Activated CD8-positive, alpha-beta T cell treated with anti-CD3 and anti-CD28 coated beads for 36 hours (primary cell): ENCODE measurements at regions of chr17 and their contacts with region 1.

Region 1: GRCh38 chr17:58006924-58007780 is at the start of gene SRSF1:
- DNase-seq: peak; percentile 98
- ATAC-seq: peak; percentile 91
- H3K4me3 Mint-ChIP-seq: peak within 1 kb of the TSS; percentile 97
- H3K27ac Mint-ChIP-seq: peak within 1 kb of the TSS; percentile 99
- H3K4me1 Mint-ChIP-seq: peaks cover 40% of the 10 kb centered on the region
- H3K27me3 Mint-ChIP-seq: no peaks in the 10 kb centered on the region
- CTCF ChIP-seq: no peak
- total RNA-seq, gene SRSF1: 333 to 342 TPM

Region 2: DNA sequence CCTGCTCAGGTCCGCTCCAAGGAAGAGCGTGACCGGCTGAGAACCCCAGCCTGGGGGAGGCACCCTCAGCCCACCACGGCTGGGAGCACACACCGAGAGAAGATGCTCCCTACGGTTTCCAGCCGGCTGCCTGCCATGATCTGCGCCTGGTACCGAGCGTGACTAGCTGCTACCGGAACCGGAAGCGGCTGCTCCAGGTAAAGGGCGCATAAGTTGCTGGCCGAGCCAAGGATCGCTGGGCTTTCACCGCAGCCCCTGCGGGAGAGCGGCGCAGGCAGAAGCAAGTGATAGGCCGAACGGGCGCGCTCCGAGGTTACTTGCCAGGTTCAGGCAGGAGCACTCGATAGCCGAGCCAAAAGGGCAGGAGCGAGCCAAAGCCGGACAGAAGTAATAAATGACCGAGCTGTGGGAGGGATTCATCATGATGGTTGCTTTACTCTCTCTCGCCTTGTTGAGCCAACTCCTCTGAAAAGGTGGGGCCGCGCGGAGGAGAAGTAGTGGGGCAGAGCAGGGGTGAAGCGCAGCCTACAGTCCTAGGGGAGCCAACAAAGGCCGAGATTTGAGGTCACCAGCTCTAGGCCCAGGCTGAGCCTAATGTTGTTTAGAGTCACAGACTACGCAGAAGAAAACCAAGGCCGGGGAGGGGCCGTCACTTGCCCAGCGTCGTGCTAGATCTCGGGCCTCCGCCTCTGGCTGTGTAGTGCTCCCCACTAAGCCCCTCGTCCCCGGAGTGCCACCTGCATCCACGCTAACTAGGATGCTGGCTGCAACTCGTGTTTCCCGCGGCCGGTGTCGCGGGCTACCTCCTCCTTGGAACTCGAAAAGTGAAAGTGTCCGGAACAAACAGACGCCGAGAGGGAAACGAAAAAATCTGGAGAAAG is 157.0 kb before region 1 on chr17 and contains the start of gene MRPS23:
- CTCF ChIA-PET with region 1: interaction called, 177 read pairs
- POLR2A ChIA-PET with region 1: interaction called, 18 read pairs
- intact Hi-C with region 1: no loop called
- DNase-seq: peak; percentile 98
- ATAC-seq: peak; percentile 97
- H3K4me3 Mint-ChIP-seq: peak within 1 kb of the TSS; percentile 91
- H3K27ac Mint-ChIP-seq: peak within 1 kb of the TSS; percentile 95
- H3K4me1 Mint-ChIP-seq: peaks cover 30% of the 10 kb centered on the region
- H3K27me3 Mint-ChIP-seq: no peaks in the 10 kb centered on the region
- CTCF ChIP-seq: no peak
- total RNA-seq, gene MRPS23: 69.5 to 70.0 TPM

Region 3: GRCh38 chr17:57987580-57988421 is 19.4 kb before region 1 on chr17 and contains the start of gene VEZF1:
- CTCF ChIA-PET with region 1: interaction called, 10 read pairs
- POLR2A ChIA-PET with region 1: interaction called, 230 read pairs
- intact Hi-C with region 1: no loop called
- DNase-seq: peak; percentile 81
- ATAC-seq: peak; percentile 64
- H3K4me3 Mint-ChIP-seq: peak within 1 kb of the TSS; percentile 87
- H3K27ac Mint-ChIP-seq: peak within 1 kb of the TSS; percentile 91
- H3K4me1 Mint-ChIP-seq: peaks cover 67% of the 10 kb centered on the region
- H3K27me3 Mint-ChIP-seq: no peaks in the 10 kb centered on the region
- CTCF ChIP-seq: no peak
- total RNA-seq, gene VEZF1: 17.9 to 19.6 TPM

Region 4: GRCh38 chr17:58046239-58047094 is 39.3 kb after region 1 on chr17:
- CTCF ChIA-PET with region 1: no interaction called
- POLR2A ChIA-PET with region 1: no interaction called
- intact Hi-C with region 1: no loop called
- DNase-seq: no peak
- ATAC-seq: no peak
- H3K4me3 Mint-ChIP-seq: no peak overlapping the region
- H3K27ac Mint-ChIP-seq: no peak overlapping the region
- H3K4me1 Mint-ChIP-seq: no peaks in the 10 kb centered on the region
- H3K27me3 Mint-ChIP-seq: peaks cover 14% of the 10 kb centered on the region
- CTCF ChIP-seq: no peak

Region 5: DNA sequence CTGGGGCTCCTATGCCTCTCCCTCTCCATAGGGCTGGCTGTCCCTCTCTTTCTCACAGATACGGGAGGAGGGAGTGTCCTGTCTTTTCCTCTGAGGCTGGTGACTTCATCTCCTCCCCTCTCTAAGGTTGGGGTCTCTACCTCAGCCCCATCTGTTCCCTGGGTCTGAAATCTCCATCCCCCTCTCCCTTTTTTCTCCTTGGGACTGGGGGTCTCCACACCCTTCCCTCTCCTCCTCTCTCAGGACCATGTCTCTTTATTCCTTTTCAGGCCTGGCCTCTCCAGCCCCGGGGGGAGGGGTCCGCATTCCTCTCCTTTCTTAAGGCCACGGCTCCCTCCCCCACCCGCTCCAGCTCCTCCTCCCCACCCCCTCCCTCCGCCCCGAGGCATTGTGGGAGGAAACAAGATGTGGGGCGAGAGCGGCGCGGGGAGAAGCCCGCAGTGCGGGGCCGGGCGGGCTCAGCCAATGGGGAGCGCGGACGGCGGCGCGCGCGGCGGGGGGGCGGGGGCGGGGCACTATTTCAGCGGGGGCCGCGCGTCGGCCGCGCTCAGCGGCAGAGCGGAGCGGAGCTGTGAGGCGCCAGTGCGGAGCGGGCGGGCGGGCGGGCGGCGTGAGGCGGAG is 75.8 kb after region 1 on chr17 and contains the start of gene DYNLL2:
- CTCF ChIA-PET with region 1: interaction called, 3 read pairs
- POLR2A ChIA-PET with region 1: interaction called, 50 read pairs
- intact Hi-C with region 1: loop called (anchors 2 kb)
- DNase-seq: peak; percentile 93
- ATAC-seq: peak; percentile 87
- H3K4me3 Mint-ChIP-seq: peak within 1 kb of the TSS; percentile 84
- H3K27ac Mint-ChIP-seq: peak within 1 kb of the TSS; percentile 80
- H3K4me1 Mint-ChIP-seq: peaks cover 35% of the 10 kb centered on the region
- H3K27me3 Mint-ChIP-seq: no peaks in the 10 kb centered on the region
- CTCF ChIP-seq: no peak
- total RNA-seq, gene DYNLL2: 25.6 to 26.1 TPM

Region 6: GRCh38 chr17:58096892-58097291 is 89.7 kb after region 1 on chr17:
- CTCF ChIA-PET with region 1: no interaction called
- POLR2A ChIA-PET with region 1: interaction called, 3 read pairs
- intact Hi-C with region 1: loop called (anchors 5 kb)
- DNase-seq: no peak
- ATAC-seq: no peak
- H3K4me3 Mint-ChIP-seq: no peak overlapping the region
- H3K27ac Mint-ChIP-seq: no peak overlapping the region
- H3K4me1 Mint-ChIP-seq: peaks cover 7% of the 10 kb centered on the region
- H3K27me3 Mint-ChIP-seq: no peaks in the 10 kb centered on the region
- CTCF ChIP-seq: no peak